ENCODE measurements at regions of chr12 and their contacts with region 1.

Region 1: DNA sequence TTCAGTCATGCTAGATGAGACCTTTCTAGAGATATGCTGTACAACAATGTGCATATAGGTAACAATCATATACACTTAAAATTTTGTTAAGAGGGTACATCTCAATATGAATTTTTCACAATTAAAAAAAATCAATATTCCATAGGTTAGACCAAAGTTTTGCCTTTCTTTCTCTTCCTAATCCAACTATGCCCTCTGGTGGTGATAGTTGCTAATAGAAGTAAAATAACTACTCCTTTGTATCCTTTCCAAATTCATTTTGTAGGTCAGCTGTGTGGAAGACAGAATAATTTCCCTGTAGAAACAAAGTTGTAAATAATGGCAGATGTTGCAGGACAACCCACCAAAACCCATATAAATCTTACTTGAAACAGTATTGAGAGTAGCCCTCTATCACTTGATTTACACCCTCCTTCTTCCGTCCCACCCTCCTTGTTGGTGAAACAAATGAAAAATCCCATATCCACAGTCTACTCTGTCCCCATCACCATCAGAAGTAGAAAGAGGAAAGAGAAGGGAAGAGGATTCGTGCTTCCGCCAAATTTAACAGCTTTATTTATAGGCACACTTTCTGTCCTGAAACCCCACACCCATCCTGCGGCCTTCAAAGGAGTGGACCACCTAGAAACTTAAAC is 34.2 kb upstream of the KICS2 start:
- DNase-seq: no peak
- ATAC-seq: peak in 2 of 4 donors; percentile 50 to 83
- H3K4me3 ChIP-seq: no peak overlapping the region
- H3K27ac ChIP-seq: no peak overlapping the region
- H3K4me1 ChIP-seq: no peaks in the 10 kb centered on the region
- H3K27me3 ChIP-seq: no peaks in the 10 kb centered on the region
- CTCF ChIP-seq: peak; percentile 81

Region 2: GRCh38 chr12:63668028-63668799 is 588.1 kb before region 1 on chr12 and contains the start of gene DPY19L2:
- intact Hi-C with region 1: loop called in 1 of 2 experiments (anchors 10 kb)
- DNase-seq: peak; percentile 54 to 79
- ATAC-seq: peak; percentile 39 to 90 (median 77)
- H3K4me3 ChIP-seq: peak within 1 kb of the TSS; percentile 66
- H3K27ac ChIP-seq: peak within 1 kb of the TSS; percentile 10
- H3K4me1 ChIP-seq: no peaks in the 10 kb centered on the region
- H3K27me3 ChIP-seq: no peaks in the 10 kb centered on the region
- CTCF ChIP-seq: no peak
- total RNA-seq, gene DPY19L2: 0.32 to 2.0 (median 0.50) TPM

Region 3: DNA sequence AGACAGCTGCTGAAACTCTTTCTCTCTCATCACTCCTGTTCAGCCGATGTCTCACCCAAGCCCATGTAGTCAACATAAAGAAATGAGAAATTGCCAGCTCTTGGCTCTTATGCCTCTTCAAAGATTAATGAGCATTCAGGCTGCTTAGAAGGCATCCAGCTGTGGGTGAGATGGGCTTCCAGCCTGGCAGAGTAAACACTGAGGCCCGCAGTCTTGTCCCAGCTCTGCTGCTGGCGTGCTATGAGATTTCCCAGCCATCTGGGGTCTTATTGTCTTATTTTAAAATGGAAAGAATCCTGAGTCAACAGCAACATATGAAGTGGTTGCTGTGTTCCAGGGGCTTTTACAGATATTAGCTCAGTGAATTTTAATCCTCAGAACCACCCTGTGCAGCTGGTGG is 463.9 kb before region 1 on chr12:
- intact Hi-C with region 1: no loop called
- DNase-seq: no peak
- ATAC-seq: no peak
- H3K4me3 ChIP-seq: no peak overlapping the region
- H3K27ac ChIP-seq: no peak overlapping the region
- H3K4me1 ChIP-seq: no peaks in the 10 kb centered on the region
- H3K27me3 ChIP-seq: no peaks in the 10 kb centered on the region
- CTCF ChIP-seq: no peak

Region 4: GRCh38 chr12:64181504-64182291 is 74.6 kb before region 1 on chr12:
- intact Hi-C with region 1: loop called in 1 of 2 experiments (anchors 5 kb)
- DNase-seq: peak in 1 of 2 donors; percentile 19
- ATAC-seq: peak; percentile 84 to 94 (median 92)
- H3K4me3 ChIP-seq: no peak overlapping the region
- H3K27ac ChIP-seq: peak overlapping the region; percentile 59
- H3K4me1 ChIP-seq: peaks cover 16% of the 10 kb centered on the region
- H3K27me3 ChIP-seq: no peaks in the 10 kb centered on the region
- CTCF ChIP-seq: peak; percentile 58

Region 5: DNA sequence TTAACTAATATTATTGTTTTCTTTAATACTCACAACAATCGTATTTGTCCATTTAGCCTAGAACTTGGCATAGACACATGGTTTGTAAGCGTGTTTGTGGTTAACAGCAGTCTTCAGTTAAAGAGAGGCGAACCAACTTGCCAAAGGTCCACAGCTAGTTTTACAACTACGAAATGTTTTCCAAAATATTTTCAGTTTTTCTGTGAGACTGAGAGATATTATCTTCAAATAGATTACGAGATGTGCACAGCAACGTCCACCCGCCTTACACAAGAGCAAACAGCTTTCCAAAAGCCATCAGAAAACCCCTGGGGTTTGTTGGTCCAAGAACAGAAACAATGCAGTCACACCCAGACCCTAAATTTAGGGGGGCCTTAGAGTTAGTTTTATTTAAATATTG is 295.4 kb after region 1 on chr12:
- intact Hi-C with region 1: no loop called
- DNase-seq: no peak
- ATAC-seq: no peak
- H3K4me3 ChIP-seq: no peak overlapping the region
- H3K27ac ChIP-seq: no peak overlapping the region
- H3K4me1 ChIP-seq: peaks cover 3% of the 10 kb centered on the region
- H3K27me3 ChIP-seq: no peaks in the 10 kb centered on the region
- CTCF ChIP-seq: no peak

Measured in psoas muscle (tissue), 8 donors.